ENCODE measurements at regions of chr11 and their contacts with region 1.

Region 1: GRCh38 chr11:28107748-28108618 is at the starts of genes KIF18A and METTL15:
- DNase-seq: peak; percentile 99
- H3K4me3 Mint-ChIP-seq: peak within 1 kb of the TSS; percentile 98
- H3K27ac Mint-ChIP-seq: peak within 1 kb of the TSS; percentile 99
- H3K4me1 Mint-ChIP-seq: peaks cover 50% of the 10 kb centered on the region
- H3K27me3 Mint-ChIP-seq: no peaks in the 10 kb centered on the region
- total RNA-seq, gene KIF18A: 18.0 and 19.1 TPM in 2 replicates
- total RNA-seq, gene METTL15: 15.3 and 17.4 TPM in 2 replicates

Region 2: GRCh38 chr11:27506200-27507182 is 601.5 kb before region 1 on chr11 and contains the start of gene LIN7C:
- intact Hi-C with region 1: loop called (anchors 1 kb)
- DNase-seq: peak; percentile 83
- H3K4me3 Mint-ChIP-seq: peak within 1 kb of the TSS; percentile 99
- H3K27ac Mint-ChIP-seq: peak within 1 kb of the TSS; percentile 99
- H3K4me1 Mint-ChIP-seq: peaks cover 33% of the 10 kb centered on the region
- H3K27me3 Mint-ChIP-seq: no peaks in the 10 kb centered on the region
- total RNA-seq, gene LIN7C: 29.6 and 31.0 TPM in 2 replicates

Region 3: DNA sequence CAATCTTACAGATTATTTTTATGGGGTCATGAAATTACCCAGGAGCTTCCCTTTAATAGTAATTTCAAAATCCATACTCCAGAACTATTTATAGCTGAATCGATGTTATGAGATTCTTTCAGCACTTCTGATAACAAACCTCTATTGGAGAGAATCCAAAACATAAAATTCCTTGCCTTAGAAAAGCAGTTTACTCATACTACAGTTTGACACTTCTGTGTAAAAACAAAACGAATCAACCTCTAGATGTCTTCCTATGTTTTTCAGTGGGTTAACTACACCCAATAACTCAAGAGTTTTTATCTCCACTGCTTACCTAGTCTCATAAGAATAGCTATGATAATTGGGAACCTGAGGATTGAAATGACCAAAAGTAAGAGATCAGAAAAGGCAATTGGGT is 35.7 kb before region 1 on chr11:
- intact Hi-C with region 1: loop called (anchors 5 kb)
- DNase-seq: no peak
- H3K4me3 Mint-ChIP-seq: no peak overlapping the region
- H3K27ac Mint-ChIP-seq: no peak overlapping the region
- H3K4me1 Mint-ChIP-seq: peaks cover 1% of the 10 kb centered on the region
- H3K27me3 Mint-ChIP-seq: no peaks in the 10 kb centered on the region

Region 4: GRCh38 chr11:28140689-28141455 is 32.9 kb after region 1 on chr11:
- intact Hi-C with region 1: no loop called
- DNase-seq: no peak
- H3K4me3 Mint-ChIP-seq: no peak overlapping the region
- H3K27ac Mint-ChIP-seq: no peak overlapping the region
- H3K4me1 Mint-ChIP-seq: peaks cover 14% of the 10 kb centered on the region
- H3K27me3 Mint-ChIP-seq: no peaks in the 10 kb centered on the region